ENCODE measurements at regions of chr10 and their contacts with region 1.

Region 1: DNA sequence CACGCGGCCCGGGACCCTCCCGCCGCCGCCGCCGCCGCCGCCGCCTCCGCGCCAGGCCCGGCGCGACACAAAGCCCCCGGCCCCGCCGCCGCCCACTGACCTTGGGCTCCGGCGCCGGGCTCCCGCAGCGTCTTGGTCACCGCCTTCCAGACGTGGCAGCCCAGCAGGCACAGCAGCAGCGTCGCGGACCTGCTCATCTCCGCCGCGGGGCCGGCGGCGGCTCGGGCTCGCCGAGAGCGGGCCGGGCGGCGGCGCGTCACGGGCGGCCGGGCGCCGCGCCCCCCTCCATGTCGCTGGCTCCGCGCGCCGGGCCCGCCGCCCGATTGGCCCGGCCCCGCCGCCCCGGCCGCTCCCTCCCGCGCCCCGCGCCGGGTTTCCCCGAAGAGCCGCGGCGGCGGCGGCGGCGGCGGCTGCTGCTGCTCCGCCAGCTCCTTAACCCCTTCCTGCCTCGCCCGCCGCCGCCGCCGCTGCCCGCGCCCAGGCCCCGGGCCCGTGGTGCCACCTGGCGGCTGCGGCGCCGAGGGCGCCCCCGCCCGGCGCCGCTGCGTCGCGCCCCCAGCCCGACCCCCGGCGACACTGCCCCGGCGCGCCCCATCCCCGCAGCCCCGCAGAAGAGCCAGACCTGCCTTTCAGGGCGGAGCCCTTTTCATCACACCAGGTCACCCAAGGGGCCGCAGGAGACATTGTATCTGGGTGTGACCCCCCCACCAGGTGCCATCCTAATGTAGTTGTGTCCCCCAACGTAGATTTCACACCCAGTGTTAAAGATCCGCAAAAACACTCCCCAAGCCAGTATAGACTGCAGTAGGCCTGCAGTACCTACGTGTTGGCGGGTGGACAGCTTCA is at the start of gene FAM171A1:
- DNase-seq: peak; percentile 37 to 71 (median 62)
- ATAC-seq: peak; percentile 91
- H3K4me3 ChIP-seq: peak within 1 kb of the TSS; percentile 47
- H3K4me3 Mint-ChIP-seq: peak within 1 kb of the TSS; percentile 59 to 92 (median 83)
- H3K27ac ChIP-seq: peak within 1 kb of the TSS; percentile 21
- H3K27ac Mint-ChIP-seq: peak within 1 kb of the TSS in 8 of 9 donors; percentile 18 to 89 (median 62)
- H3K4me1 ChIP-seq: peaks cover 3 to 5% of the 10 kb centered on the region in 2 donors
- H3K4me1 Mint-ChIP-seq: peaks cover 4 to 12% (median 5%) of the 10 kb centered on the region in 7 donors
- H3K27me3 ChIP-seq: peaks cover 0 to 9% of the 10 kb centered on the region in 2 donors
- H3K27me3 Mint-ChIP-seq: peaks cover 0 to 81% (median 6%) of the 10 kb centered on the region in 5 donors
- total RNA-seq, gene FAM171A1: 3.2 to 8.0 (median 4.9) TPM

Region 2: GRCh38 chr10:14995964-14996565 is 375.0 kb before region 1 on chr10:
- CTCF ChIA-PET with region 1: no interaction called
- POLR2A ChIA-PET with region 1: no interaction called
- intact Hi-C with region 1: loop called (anchors 1 to 5 kb)
- DNase-seq: no peak
- ATAC-seq: no peak
- H3K4me3 ChIP-seq: no peak overlapping the region
- H3K4me3 Mint-ChIP-seq: peak overlapping the region in 1 of 10 donors; percentile 50
- H3K27ac ChIP-seq: no peak overlapping the region
- H3K27ac Mint-ChIP-seq: no peak overlapping the region
- H3K4me1 ChIP-seq: no peaks in the 10 kb centered on the region
- H3K4me1 Mint-ChIP-seq: peaks cover 0 to 8% (median 0%) of the 10 kb centered on the region in 7 donors
- H3K27me3 ChIP-seq: no peaks in the 10 kb centered on the region
- H3K27me3 Mint-ChIP-seq: peaks cover 0 to 5% (median 0%) of the 10 kb centered on the region in 5 donors

Region 3: GRCh38 chr10:15106352-15107013 is 264.6 kb before region 1 on chr10:
- CTCF ChIA-PET with region 1: no interaction called
- POLR2A ChIA-PET with region 1: no interaction called
- intact Hi-C with region 1: loop called in 1 of 2 experiments (anchors 2 kb)
- DNase-seq: peak; percentile 41 to 67 (median 58)
- ATAC-seq: peak; percentile 99
- H3K4me3 ChIP-seq: no peak overlapping the region
- H3K4me3 Mint-ChIP-seq: no peak overlapping the region
- H3K27ac ChIP-seq: peak overlapping the region; percentile 9
- H3K27ac Mint-ChIP-seq: peak overlapping the region; percentile 26 to 88 (median 68)
- H3K4me1 ChIP-seq: no peaks in the 10 kb centered on the region
- H3K4me1 Mint-ChIP-seq: peaks cover 3 to 9% (median 5%) of the 10 kb centered on the region in 7 donors
- H3K27me3 ChIP-seq: no peaks in the 10 kb centered on the region
- H3K27me3 Mint-ChIP-seq: no peaks in the 10 kb centered on the region

Region 4: GRCh38 chr10:15209827-15210509 is 161.1 kb before region 1 on chr10:
- CTCF ChIA-PET with region 1: interaction called, 4 read pairs
- POLR2A ChIA-PET with region 1: no interaction called
- intact Hi-C with region 1: loop called (anchors 1 kb)
- DNase-seq: peak; percentile 49 to 75 (median 71)
- ATAC-seq: peak; percentile 77
- H3K4me3 ChIP-seq: peak overlapping the region; percentile 4
- H3K4me3 Mint-ChIP-seq: peak overlapping the region; percentile 16 to 82 (median 62)
- H3K27ac ChIP-seq: peak overlapping the region; percentile 18
- H3K27ac Mint-ChIP-seq: peak overlapping the region; percentile 13 to 99 (median 85)
- H3K4me1 ChIP-seq: peaks cover 23 to 47% of the 10 kb centered on the region in 2 donors
- H3K4me1 Mint-ChIP-seq: peaks cover 30 to 67% (median 63%) of the 10 kb centered on the region in 7 donors
- H3K27me3 ChIP-seq: no peaks in the 10 kb centered on the region
- H3K27me3 Mint-ChIP-seq: no peaks in the 10 kb centered on the region

Region 5: GRCh38 chr10:15262036-15262713 is 108.9 kb before region 1 on chr10:
- CTCF ChIA-PET with region 1: no interaction called
- POLR2A ChIA-PET with region 1: no interaction called
- intact Hi-C with region 1: loop called in 1 of 2 experiments (anchors 10 kb)
- DNase-seq: peak in 1 of 9 donors; percentile 10
- ATAC-seq: peak; percentile 22
- H3K4me3 ChIP-seq: no peak overlapping the region
- H3K4me3 Mint-ChIP-seq: no peak overlapping the region
- H3K27ac ChIP-seq: no peak overlapping the region
- H3K27ac Mint-ChIP-seq: no peak overlapping the region
- H3K4me1 ChIP-seq: no peaks in the 10 kb centered on the region
- H3K4me1 Mint-ChIP-seq: no peaks in the 10 kb centered on the region
- H3K27me3 ChIP-seq: no peaks in the 10 kb centered on the region
- H3K27me3 Mint-ChIP-seq: no peaks in the 10 kb centered on the region

Region 6: DNA sequence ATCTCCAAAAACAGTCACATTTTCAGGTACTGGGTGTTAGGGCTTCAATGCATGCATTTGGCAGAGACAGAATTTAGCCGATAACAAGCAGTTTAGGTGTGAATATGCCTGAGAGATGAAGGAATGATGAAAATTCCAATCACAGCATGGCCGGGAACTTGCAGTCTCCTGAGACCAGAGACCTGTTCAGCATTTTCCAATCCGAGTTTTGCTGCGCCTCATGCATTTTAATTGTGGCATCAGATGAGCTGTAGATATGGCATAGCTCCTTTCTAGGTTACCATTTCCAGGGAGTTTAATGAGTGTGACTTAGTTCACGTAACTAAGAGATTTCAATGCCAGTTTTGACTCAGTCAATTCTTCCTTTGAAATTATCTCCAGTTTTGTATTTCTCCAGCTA is 1165.1 kb after region 1 on chr10:
- CTCF ChIA-PET with region 1: no interaction called
- POLR2A ChIA-PET with region 1: no interaction called
- intact Hi-C with region 1: no loop called
- DNase-seq: no peak
- ATAC-seq: no peak
- H3K4me3 ChIP-seq: no peak overlapping the region
- H3K4me3 Mint-ChIP-seq: no peak overlapping the region
- H3K27ac ChIP-seq: no peak overlapping the region
- H3K27ac Mint-ChIP-seq: no peak overlapping the region
- H3K4me1 ChIP-seq: no peaks in the 10 kb centered on the region
- H3K4me1 Mint-ChIP-seq: peaks cover 0 to 2% (median 0%) of the 10 kb centered on the region in 7 donors
- H3K27me3 ChIP-seq: no peaks in the 10 kb centered on the region
- H3K27me3 Mint-ChIP-seq: peaks cover 4 to 29% (median 19%) of the 10 kb centered on the region in 5 donors